ENCODE measurements at regions of chr1 and their contacts with region 1.

Region 1: DNA sequence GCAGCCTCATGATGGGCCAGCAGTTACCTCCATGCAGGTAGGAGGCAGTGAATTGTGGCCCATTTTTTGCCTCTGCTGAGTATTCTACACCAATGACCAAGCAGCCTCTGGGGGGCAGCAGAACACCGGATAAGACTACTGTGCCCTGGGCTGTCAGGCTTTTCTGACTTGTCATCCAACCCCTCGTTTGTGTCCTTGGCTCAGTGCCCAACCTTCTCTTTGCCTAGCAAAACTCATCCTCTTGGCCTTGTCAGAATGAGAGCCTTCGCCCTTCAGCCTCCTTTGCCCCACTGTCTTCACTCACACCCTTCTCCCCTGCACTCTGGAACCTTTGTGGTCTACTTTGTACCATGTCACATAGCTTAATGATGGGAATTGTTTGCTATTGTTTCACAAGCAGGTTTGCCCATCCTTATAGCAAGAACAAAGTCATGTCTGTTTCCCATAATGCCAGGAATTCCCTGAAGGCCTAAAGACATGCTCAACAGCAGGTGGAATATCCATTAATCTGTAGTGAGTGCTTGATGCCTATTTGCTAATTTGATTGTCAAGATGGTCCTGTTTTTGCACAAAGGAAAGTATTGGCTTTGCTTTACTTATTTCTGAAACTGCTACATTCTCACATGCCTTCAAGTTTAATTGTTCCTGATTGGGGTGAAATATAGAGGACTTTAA is 255.9 kb downstream of the HHAT start:
- DNase-seq: peak; percentile 83
- ATAC-seq: peak; percentile 86 to 89

Region 2: GRCh38 chr1:209704584-209704983 is 880.0 kb before region 1 on chr1 and contains the start of gene HSD11B1:
- intact Hi-C with region 1: no loop called
- DNase-seq: peak; percentile 75
- ATAC-seq: peak; percentile 94 to 96
- total RNA-seq, gene HSD11B1: 5.6 to 6.8 TPM

Region 3: GRCh38 chr1:210448297-210448892 is 136.2 kb before region 1 on chr1:
- intact Hi-C with region 1: loop called in 1 of 2 experiments (anchors 5 kb)
- DNase-seq: no peak
- ATAC-seq: peak; percentile 41 to 53

Region 4: DNA sequence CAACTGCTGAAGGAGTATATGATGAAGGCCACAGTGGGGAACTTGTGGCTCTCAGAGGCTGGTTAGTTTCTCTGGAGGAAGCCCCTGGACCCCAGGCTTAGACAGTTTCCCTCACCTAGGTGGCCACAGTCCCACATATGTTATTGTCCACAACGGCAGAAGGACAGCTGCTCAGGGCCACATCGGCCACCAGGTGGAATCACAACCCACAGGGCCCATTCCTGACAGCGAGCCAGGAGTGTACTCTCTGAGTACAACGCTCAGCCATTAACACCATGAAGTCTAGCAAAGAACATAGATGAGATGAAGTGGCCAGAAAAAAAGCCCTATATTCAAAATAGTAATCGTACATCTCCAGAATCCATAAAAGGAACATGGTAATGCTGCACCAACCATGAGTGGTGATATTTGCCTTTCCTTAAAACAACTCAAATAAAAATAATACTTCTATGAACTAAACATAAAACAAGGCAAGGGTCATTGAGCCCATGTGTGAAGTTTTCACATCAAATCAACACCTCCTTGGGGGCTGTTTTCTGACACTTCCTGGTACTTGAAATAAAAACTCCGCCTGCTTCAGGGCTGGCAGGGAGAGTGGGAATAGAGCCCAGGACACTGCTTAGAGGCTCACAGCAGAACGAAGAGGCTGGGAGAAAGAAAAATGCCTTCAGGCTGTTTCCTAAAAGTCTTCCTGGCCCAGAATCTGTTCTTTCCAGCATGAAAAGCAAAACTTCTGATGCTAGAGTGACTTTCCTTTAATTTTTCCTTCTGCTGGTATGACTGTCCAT is 127.4 kb after region 1 on chr1:
- intact Hi-C with region 1: loop called in 1 of 2 experiments (anchors 5 kb)
- DNase-seq: peak; percentile 38
- ATAC-seq: peak; percentile 48 to 72

Region 5: DNA sequence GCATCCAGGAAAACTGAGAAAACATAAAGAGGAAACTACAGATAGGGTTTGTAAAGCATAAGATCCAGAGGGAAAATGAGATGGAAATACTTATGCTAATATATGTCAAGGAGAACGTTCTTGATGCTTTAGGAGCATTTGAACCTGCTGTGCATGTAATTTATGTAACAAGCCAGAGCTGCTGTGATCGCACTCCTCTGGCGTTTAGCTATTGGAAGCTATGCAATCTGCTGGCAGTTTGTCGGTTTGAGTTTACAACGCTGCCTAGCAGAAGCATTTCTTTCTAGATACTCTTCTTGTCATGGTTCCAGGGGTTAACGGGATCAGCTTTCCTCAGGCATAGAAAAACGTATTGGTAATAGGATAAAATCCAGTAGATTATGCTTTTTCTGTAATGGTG is 366.7 kb after region 1 on chr1:
- intact Hi-C with region 1: loop called in 1 of 2 experiments (anchors 5 kb)
- DNase-seq: no peak
- ATAC-seq: no peak

Region 6: DNA sequence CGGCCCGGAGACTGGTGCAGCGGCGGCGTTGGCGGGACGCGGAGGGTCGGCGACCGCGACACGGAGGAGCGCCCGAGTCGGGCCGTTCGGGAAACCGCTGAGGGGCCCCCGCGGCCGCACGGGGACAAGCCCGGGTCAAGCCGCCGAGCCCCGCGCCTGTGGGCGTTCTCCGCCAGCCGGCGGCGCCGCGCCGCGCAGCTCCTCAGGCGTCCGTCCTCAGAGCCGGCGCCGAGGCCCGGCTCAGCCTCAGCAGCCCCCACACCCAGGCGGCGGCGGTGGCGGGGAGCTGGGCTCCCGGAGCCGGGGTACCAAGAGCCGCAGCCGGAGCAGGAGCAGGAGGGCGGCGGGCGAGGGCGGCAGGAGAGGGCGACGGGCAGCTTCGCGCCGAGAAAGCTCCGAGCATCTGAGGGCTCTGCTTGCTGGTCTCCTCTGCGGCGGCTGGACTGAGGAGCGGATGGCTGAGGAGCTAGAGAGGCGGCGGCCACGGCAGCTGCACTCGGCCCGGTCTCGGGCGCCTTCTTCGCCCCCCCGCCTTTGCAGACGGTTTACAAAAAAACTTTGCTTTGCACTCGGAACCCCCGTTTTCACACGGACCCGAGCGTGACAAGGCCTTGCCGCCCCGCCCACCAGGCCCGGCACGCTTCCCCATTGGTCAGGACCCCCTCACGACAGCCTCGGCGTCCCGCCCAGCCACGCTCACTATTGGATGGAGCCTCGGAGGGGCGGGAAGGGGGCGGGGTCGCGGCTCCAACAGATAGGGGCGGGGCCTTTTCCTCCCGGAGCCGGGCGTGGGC is 994.3 kb after region 1 on chr1 and contains the start of gene SLC30A1:
- intact Hi-C with region 1: no loop called
- DNase-seq: peak; percentile 100
- ATAC-seq: peak; percentile 95 to 97
- total RNA-seq, gene SLC30A1: 11.0 to 13.9 TPM

Measured in left cardiac atrium (tissue), 4 donors.